Activated B cell treated with CpG ODN at 0.5 μM for 24 hours (primary cell): ENCODE measurements at regions of chr1 and their contacts with region 1.

Region 1: DNA sequence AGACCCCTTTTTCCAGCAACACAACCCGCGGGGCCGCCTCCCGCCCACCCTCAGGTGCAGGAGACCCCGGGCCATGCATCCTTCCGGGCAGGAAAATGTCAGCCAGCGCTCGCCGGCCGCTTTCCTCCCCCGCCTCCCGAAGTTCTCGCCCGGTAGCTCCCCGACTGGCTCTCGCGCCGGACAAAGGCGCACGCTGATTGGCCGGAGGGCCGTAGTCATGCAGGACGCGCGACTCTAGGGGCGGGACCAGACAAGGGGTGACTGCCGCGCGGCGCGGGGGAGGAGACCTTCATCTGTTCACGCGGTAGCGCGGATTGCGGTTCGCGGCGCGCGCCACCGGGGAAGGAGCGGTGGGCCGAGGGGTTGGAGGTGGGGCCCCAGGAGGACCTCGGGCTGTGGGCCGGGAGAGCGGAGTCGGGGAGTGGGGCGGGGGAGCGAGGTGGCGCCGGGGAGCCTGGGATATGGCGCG is at the start of gene FLVCR1:
- DNase-seq: peak; percentile 90
- ATAC-seq: peak; percentile 99
- H3K4me3 Mint-ChIP-seq: peak within 1 kb of the TSS; percentile 99
- H3K27ac Mint-ChIP-seq: peak within 1 kb of the TSS; percentile 93
- H3K4me1 Mint-ChIP-seq: peaks cover 22% of the 10 kb centered on the region
- H3K27me3 Mint-ChIP-seq: no peaks in the 10 kb centered on the region
- CTCF ChIP-seq: no peak
- total RNA-seq, gene FLVCR1: 12.7 and 16.4 TPM in 2 replicates

Region 2: DNA sequence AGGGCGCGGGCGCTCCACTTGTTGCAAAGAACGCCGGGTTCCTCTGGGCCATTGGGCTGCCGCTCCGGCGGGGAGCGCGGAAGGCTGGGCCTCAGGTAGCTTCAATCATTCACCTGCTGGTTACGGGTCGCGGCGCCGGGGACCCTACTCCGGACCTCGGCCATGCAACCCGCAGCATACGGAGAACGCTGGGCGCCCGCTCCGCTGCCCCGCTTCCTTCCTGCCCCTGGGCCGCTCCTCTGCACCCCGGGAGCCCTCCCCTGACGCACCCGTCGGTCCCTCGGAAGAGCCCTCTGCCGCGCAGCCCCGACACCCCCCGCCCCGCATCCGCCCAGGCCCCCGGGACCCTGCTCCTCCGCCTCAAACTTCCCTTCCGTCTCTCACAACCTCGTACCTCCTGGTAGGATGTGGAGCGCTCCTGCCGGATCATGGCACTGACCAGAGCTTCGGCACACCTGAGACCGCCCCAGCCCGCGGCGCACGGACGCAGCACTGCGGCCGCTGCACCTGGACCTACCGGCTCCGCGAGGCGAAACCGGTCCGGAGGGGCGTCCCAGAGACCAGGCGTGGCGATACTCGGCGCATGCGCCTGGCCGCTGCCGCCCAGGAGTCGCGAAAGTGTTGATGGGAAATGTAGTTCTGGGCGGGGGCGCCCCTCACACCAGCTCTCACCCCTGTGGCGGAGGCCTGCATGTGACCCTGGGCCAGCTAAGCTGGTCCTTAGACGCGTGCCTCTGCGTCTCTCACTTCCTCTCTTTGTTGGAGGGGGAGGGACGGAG is 443.5 kb before region 1 on chr1 and contains the start of gene PACC1:
- CTCF ChIA-PET with region 1: no interaction called
- POLR2A ChIA-PET with region 1: interaction called, 3 read pairs
- intact Hi-C with region 1: loop called (anchors 2 kb)
- DNase-seq: peak; percentile 93
- ATAC-seq: peak; percentile 98
- H3K4me3 Mint-ChIP-seq: peak within 1 kb of the TSS; percentile 100
- H3K27ac Mint-ChIP-seq: peak within 1 kb of the TSS; percentile 96
- H3K4me1 Mint-ChIP-seq: peaks cover 43% of the 10 kb centered on the region
- H3K27me3 Mint-ChIP-seq: no peaks in the 10 kb centered on the region
- CTCF ChIP-seq: no peak
- total RNA-seq, gene PACC1: 15.2 and 20.0 TPM in 2 replicates

Region 3: DNA sequence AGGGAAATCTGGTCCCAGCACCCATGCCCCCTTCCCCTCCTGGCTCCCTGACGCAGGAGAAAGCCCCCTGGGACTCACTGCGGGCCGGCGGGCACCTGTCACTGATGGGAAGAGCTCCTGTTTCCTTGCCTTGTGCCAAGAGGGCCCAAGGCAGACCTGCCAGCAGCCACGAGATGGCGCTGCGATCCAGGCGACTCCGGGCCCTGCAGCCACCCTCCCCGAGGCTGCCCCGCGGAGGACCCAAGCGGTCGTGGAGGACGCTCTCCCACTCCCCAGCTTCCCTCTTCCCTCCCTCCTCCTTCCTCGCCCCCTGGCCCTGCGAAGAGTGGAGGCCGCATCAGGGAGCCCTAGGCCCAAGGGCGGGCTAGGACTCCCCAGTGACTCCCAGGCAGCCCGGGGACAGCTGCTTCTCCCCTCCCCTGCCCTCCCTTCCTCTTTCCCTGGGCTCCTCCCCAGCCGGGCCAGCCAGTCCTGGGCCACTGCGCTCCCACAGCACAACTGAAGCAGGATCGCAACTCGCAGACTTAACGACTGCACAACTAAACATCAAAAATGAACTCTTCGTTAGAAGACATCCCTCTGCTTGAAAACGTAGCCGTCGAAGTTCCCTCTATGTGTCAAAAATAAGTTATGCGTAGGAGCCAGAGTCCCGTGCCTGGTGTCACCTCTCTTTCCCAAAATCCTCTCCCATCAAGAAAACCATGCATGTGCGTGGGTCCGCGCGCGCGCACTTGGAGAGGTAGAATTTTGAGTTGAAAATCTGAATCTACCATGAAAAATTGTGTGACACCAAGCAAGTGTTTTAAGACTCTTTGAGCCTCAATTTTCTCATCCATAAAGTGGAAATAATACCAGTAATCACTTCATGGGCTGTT is 192.5 kb before region 1 on chr1:
- CTCF ChIA-PET with region 1: no interaction called
- POLR2A ChIA-PET with region 1: no interaction called
- intact Hi-C with region 1: loop called (anchors 2 kb)
- DNase-seq: peak; percentile 80
- ATAC-seq: peak; percentile 94
- H3K4me3 Mint-ChIP-seq: peak overlapping the region; percentile 82
- H3K27ac Mint-ChIP-seq: peak overlapping the region; percentile 53
- H3K4me1 Mint-ChIP-seq: peaks cover 17% of the 10 kb centered on the region
- H3K27me3 Mint-ChIP-seq: no peaks in the 10 kb centered on the region
- CTCF ChIP-seq: peak; percentile 61

Region 4: DNA sequence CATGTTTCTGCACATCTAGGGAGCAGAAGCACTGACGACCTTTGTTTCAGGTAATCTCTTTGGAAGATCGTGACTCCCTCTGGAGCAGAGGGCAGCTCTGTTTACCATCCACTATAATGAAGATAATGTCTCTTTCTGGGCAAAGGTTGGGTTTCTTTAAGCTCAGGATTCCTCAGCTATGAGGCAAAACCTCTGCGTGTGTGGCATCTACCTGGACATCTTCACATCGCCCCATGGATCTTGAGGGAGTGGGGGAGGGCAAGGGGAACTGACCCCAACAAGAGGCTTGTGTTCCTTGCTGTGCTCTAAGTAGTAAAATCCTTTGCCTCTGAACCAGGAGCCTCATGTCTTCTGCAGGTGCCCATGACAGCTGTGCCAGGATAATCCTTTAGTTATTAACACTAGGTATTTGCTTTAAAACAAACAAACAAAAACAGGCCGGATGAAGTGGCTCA is 30.2 kb before region 1 on chr1:
- CTCF ChIA-PET with region 1: no interaction called
- POLR2A ChIA-PET with region 1: interaction called, 11 read pairs
- intact Hi-C with region 1: loop called (anchors 2 kb)
- DNase-seq: no peak
- ATAC-seq: no peak
- H3K4me3 Mint-ChIP-seq: no peak overlapping the region
- H3K27ac Mint-ChIP-seq: no peak overlapping the region
- H3K4me1 Mint-ChIP-seq: peaks cover 8% of the 10 kb centered on the region
- H3K27me3 Mint-ChIP-seq: no peaks in the 10 kb centered on the region
- CTCF ChIP-seq: no peak

Region 5: GRCh38 chr1:213015099-213016050 is 157.3 kb after region 1 on chr1 and contains the start of gene ANGEL2:
- CTCF ChIA-PET with region 1: no interaction called
- POLR2A ChIA-PET with region 1: interaction called, 7 read pairs
- intact Hi-C with region 1: loop called (anchors 5 kb)
- DNase-seq: peak; percentile 87
- ATAC-seq: peak; percentile 95
- H3K4me3 Mint-ChIP-seq: peak within 1 kb of the TSS; percentile 100
- H3K27ac Mint-ChIP-seq: peak within 1 kb of the TSS; percentile 99
- H3K4me1 Mint-ChIP-seq: peaks cover 20% of the 10 kb centered on the region
- H3K27me3 Mint-ChIP-seq: no peaks in the 10 kb centered on the region
- CTCF ChIP-seq: no peak
- total RNA-seq, gene ANGEL2: 54.1 and 63.3 TPM in 2 replicates

Region 6: DNA sequence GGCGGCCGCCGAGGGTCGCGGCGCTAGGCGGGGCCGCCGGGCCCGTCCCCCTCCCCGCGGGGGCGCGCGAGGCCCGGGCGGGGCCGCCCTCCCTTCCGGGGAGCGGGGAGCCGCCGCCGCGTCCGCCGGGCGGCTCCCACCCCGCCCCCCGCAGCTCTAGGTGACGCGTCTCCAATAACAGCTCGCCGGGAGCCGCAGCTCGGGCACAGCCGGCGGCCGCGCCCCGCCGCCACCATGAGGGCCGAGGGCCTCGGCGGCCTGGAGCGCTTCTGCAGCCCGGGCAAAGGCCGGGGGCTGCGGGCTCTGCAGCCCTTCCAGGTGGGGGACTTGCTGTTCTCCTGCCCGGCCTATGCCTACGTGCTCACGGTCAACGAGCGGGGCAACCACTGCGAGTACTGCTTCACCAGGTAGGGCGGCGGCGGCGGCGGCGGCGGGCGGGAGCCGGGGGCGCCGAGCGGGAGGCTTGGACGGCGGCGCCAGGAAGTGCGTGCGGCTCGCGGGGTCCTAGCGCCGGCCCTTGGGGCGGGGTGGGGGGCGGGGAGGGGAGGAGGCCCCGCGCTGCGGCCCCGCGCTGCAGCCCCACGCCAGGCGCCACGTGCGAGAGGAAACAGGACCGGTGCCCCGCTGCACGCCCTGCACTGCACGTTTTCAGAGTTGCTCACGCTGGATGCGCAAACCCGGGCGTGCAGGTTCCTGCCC is 1423.1 kb after region 1 on chr1 and contains the start of gene SMYD2:
- CTCF ChIA-PET with region 1: no interaction called
- POLR2A ChIA-PET with region 1: no interaction called
- intact Hi-C with region 1: loop called (anchors 5 kb)
- DNase-seq: peak; percentile 69
- ATAC-seq: peak; percentile 76
- H3K4me3 Mint-ChIP-seq: peak within 1 kb of the TSS; percentile 85
- H3K27ac Mint-ChIP-seq: peak within 1 kb of the TSS; percentile 76
- H3K4me1 Mint-ChIP-seq: peaks cover 23% of the 10 kb centered on the region
- H3K27me3 Mint-ChIP-seq: no peaks in the 10 kb centered on the region
- CTCF ChIP-seq: no peak
- total RNA-seq, gene SMYD2: 18.3 and 18.8 TPM in 2 replicates